ENCODE measurements at regions of chr15 and their contacts with region 1.

Region 1: DNA sequence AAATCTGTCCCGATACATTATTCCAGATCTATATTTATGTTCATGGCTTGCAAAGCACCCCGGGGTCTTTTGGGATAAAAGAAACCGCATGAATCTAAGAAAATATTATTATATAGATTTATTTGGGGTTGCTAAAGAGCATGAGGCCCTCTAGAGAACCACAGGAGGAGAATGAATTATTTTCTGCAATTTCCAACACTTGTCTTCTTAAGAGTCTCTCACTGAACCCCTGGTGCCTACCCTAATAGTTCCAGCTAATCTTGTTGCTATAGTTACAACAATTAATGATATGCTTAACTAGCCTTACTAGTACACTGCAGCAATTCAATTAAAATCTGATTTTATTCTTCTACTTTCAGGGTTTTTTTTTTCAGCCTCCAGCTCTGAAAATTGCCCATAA is 79.7 kb downstream of the ARRDC4 start:
- DNase-seq: no peak
- H3K4me3 ChIP-seq: no peak overlapping the region
- H3K27ac ChIP-seq: no peak overlapping the region
- H3K4me1 ChIP-seq: no peaks in the 10 kb centered on the region
- H3K27me3 ChIP-seq: no peaks in the 10 kb centered on the region
- CTCF ChIP-seq: no peak

Region 2: GRCh38 chr15:98069256-98069655 is 29.1 kb after region 1 on chr15:
- intact Hi-C with region 1: loop called (anchors 1 kb)
- DNase-seq: no peak
- H3K4me3 ChIP-seq: no peak overlapping the region
- H3K27ac ChIP-seq: no peak overlapping the region
- H3K4me1 ChIP-seq: peaks cover 0 to 18% (median 3%) of the 10 kb centered on the region in 4 donors
- H3K27me3 ChIP-seq: no peaks in the 10 kb centered on the region
- CTCF ChIP-seq: no peak